KBM-7 (cell line): ENCODE measurements at regions of chr13 and their contacts with region 1.

Region 1: DNA sequence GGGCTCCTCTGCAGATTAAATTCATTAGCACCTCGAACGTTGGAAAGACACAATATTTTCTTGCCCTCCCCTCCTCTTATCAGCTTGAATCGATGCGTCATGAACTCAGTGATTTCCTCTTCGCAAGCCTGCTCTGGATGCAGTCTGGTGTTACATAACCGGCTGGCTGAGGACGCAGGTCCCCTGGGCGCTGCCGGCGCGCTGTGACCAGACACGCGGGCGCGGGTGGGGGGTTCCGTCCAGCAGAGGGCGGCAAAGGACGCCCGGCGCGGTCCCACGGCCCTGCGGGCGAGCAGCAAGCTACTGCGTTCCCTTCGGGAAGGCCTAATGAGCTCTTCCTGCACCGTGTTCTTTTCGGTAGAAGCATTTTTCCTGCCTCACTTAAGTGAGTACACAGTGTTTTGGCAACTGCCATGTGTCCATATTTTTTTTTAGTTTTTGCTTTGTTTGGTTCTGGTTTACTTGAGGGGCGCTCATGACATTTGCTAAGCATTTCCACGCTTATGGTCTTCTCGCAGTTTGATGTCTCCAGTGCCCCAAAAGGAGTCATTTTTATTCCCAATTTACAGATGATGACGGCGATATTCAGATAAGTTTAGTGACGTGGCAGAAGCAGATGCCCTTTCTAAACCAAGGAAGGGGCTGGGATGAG is 112.2 kb upstream of the MBNL2 start:
- DNase-seq: peak; percentile 84

Region 2: DNA sequence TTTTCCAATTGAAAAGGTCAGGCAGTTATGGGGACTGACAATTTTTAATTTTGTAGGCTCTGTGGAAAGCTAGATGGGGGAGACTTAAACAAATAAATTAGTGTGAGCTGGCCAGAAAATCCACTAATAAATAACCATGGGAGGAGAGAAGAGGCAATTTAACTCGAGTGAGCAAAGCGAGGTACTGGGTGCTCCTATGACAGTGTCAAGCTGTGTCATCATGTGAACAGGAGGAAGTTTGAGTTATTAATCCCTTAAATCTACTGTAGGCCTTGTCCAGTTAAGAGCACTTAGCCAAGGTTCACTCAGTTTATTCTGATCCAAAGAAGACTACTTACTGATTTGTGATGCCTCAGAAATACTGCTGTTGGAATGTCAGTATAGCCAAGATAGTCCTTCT is 238.5 kb before region 1 on chr13:
- in situ Hi-C with region 1: no loop called
- DNase-seq: no peak

Region 3: GRCh38 chr13:97344265-97345175 is 234.6 kb after region 1 on chr13:
- in situ Hi-C with region 1: loop called (anchors 25 kb)
- DNase-seq: peak; percentile 30